Right ventricle myocardium inferior (tissue), 1 donor: ENCODE measurements at regions of chr4 and their contacts with region 1.

Region 1: GRCh38 chr4:27318743-27319142 is 458.1 kb downstream of the STIM2 start:
- DNase-seq: no peak
- ATAC-seq: no peak

Region 2: DNA sequence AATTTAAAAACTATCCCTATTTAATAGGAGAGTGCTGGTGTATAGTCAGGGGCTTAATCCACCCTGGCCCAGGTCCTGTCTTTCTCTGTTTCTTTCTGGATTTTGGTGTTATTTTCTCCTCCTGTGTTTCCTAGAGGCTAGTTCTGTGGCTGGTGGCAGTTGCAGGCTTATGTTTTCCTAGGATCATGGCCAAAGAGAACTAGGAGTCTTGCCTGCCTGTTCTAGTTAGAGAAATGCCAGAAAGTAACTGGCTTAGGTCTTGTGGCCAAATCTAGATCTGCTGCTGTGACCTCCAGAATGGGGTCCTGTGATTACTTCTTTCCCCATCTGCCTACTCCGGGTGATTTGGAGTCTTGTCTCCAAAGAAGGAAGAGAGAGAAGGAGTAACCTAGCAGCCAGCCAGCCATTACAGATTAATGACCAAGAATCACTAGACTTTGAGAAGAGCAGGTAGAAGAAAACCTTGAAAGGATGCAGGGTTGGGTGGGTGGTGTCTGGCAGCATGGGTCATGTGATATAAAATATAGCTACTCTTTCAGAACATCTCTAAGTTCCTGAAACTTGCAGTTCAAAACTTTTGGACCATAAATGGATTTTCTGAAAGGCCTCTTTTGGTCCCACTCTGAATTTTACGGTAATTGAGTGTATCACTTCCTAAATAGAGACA is 340.2 kb before region 1 on chr4:
- intact Hi-C with region 1: no loop called
- DNase-seq: no peak
- ATAC-seq: peak; percentile 57

Region 3: GRCh38 chr4:27057662-27058061 is 261.1 kb before region 1 on chr4:
- intact Hi-C with region 1: loop called (anchors 10 kb)
- DNase-seq: no peak
- ATAC-seq: no peak

Region 4: GRCh38 chr4:27350161-27350560 is 31.4 kb after region 1 on chr4:
- intact Hi-C with region 1: no loop called
- DNase-seq: no peak
- ATAC-seq: no peak

Region 5: GRCh38 chr4:27412613-27413012 is 93.9 kb after region 1 on chr4:
- intact Hi-C with region 1: no loop called
- DNase-seq: no peak
- ATAC-seq: no peak